CD8-positive, alpha-beta T cell (primary cell): ENCODE measurements at regions of chr13 and their contacts with region 1.

Region 1: DNA sequence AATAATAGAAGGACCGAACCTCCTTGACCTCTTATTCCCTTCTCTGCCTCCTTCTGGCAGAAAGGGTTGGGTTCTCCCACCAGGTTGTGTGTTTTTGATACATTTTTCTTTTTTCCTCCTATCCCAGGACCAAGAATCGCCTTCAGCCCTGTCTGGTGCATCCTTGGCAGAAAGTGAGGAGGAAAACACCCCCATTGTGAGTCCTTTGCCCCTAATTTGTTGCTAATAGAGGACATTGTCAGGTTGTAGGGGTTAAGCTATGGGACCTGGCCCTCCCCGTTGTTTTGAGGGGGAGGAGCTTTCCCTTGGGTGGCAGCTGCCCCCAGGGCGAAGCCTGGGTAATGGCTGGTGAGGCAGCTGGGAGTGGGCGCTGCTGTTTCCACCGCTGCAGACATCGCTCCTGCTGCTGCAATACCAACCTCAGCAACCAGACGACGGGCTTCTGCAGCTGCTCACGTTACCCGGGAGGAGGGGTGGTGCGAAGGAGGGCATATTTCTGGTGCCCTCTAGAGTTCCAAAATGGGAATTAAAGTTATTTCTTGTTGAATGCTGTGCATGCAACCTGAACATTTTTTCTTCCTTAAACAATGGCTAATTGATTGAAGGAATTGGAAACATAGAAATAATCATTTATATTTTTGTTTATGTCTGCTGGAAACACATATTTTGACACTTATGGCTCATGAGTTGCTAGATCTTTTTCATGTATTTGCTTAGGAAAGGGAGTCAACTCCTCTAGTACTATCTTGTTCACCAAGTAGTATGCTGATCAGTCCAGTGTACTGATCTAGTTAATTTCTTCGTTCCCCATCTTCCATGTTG is 1.5 kb downstream of the ZMYM2 start:
- DNase-seq: peak; percentile 69 to 95 (median 84)
- ATAC-seq: peak; percentile 50
- H3K4me3 ChIP-seq: peak overlapping the region; percentile 56 to 88
- H3K4me3 Mint-ChIP-seq: peak overlapping the region; percentile 97
- H3K27ac ChIP-seq: peak overlapping the region; percentile 59 to 79
- H3K27ac Mint-ChIP-seq: peak overlapping the region; percentile 98
- H3K4me1 ChIP-seq: peaks cover 29% of the 10 kb centered on the region
- H3K4me1 Mint-ChIP-seq: peaks cover 45% of the 10 kb centered on the region
- H3K27me3 ChIP-seq: no peaks in the 10 kb centered on the region
- H3K27me3 Mint-ChIP-seq: no peaks in the 10 kb centered on the region
- CTCF ChIP-seq: peak; percentile 94

Region 2: DNA sequence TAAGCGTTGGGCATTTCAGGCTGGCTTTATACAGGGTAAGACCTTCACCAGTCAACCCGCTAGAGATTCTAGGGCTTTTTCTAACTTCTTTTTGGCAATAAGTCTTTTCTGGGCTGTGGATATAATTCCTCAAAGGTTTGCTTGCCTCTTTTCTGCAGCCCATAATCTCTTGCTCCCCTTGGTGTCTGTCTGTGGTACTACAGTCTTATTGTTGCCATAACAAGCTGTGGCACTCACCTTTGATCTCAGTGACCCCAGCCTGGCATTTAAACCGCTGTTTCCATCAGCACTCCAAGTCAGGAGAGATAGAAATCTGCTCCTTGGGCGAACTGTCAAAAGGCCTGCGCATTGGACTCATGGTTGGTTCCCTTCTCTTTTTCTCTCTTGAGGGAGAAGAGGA is 341.1 kb before region 1 on chr13:
- CTCF ChIA-PET with region 1: no interaction called
- POLR2A ChIA-PET with region 1: no interaction called
- intact Hi-C with region 1: no loop called
- DNase-seq: peak in 2 of 9 experiments; percentile 26 to 50
- ATAC-seq: no peak
- H3K4me3 ChIP-seq: no peak overlapping the region
- H3K4me3 Mint-ChIP-seq: no peak overlapping the region
- H3K27ac ChIP-seq: no peak overlapping the region
- H3K27ac Mint-ChIP-seq: no peak overlapping the region
- H3K4me1 ChIP-seq: no peaks in the 10 kb centered on the region
- H3K4me1 Mint-ChIP-seq: no peaks in the 10 kb centered on the region
- H3K27me3 ChIP-seq: no peaks in the 10 kb centered on the region
- H3K27me3 Mint-ChIP-seq: peaks cover 35% of the 10 kb centered on the region
- CTCF ChIP-seq: peak; percentile 50

Region 3: DNA sequence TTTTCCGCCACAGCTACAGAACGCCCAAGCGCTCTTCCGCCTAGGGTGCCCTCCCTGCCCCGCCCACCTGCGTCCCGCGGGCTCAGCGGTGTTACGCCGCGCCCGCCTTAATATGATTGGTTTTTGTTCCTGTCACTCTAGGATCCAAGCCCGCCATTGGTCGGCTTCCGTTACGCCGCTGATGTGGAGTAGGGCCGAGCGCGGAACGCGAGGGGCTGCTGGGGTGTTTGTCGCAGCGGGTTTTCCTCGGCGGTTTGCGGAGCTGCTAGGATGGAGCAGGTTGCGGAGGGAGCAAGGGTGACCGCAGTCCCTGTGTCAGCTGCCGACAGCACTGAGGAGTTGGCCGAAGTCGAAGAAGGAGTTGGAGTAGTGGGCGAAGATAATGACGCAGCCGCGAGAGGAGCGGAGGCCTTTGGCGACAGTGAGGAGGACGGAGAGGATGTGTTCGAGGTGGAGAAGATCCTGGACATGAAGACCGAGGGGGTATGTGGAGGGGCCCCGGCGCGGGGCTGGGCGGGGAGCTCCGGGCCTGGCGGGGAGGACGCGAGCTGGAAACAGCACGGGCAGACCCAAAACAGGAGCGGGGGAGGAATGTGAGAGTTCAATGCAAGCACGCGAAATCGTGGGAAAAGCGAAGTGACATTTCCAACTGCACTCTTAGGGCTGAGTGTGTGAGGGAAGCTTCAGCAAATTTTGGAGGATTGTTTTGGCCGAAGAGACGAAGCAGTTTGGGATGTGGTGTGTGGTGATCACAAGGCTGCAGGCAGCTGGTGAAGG is 326.4 kb before region 1 on chr13 and contains the start of gene MPHOSPH8:
- CTCF ChIA-PET with region 1: no interaction called
- POLR2A ChIA-PET with region 1: interaction called, 3 read pairs
- intact Hi-C with region 1: loop called (anchors 1 to 5 kb)
- DNase-seq: peak; percentile 88 to 98 (median 93)
- ATAC-seq: peak; percentile 95
- H3K4me3 ChIP-seq: peak within 1 kb of the TSS; percentile 82 to 89
- H3K4me3 Mint-ChIP-seq: peak within 1 kb of the TSS; percentile 100
- H3K27ac ChIP-seq: peak within 1 kb of the TSS; percentile 88 to 90
- H3K27ac Mint-ChIP-seq: peak within 1 kb of the TSS; percentile 100
- H3K4me1 ChIP-seq: peaks cover 35% of the 10 kb centered on the region
- H3K4me1 Mint-ChIP-seq: peaks cover 33% of the 10 kb centered on the region
- H3K27me3 ChIP-seq: no peaks in the 10 kb centered on the region
- H3K27me3 Mint-ChIP-seq: no peaks in the 10 kb centered on the region
- CTCF ChIP-seq: no peak
- total RNA-seq, gene MPHOSPH8: 32.9 to 35.6 TPM

Region 4: GRCh38 chr13:19863323-19864023 is 96.6 kb before region 1 on chr13 and contains the start of gene ZMYM5:
- CTCF ChIA-PET with region 1: interaction called, 6 read pairs
- POLR2A ChIA-PET with region 1: interaction called, 17 read pairs
- intact Hi-C with region 1: loop called in 1 of 2 experiments (anchors 1 kb)
- DNase-seq: peak; percentile 85 to 98 (median 95)
- ATAC-seq: peak; percentile 83
- H3K4me3 ChIP-seq: peak within 1 kb of the TSS; percentile 64 to 74
- H3K4me3 Mint-ChIP-seq: peak within 1 kb of the TSS; percentile 90
- H3K27ac ChIP-seq: peak within 1 kb of the TSS; percentile 78 to 97
- H3K27ac Mint-ChIP-seq: peak within 1 kb of the TSS; percentile 97
- H3K4me1 ChIP-seq: peaks cover 25% of the 10 kb centered on the region
- H3K4me1 Mint-ChIP-seq: peaks cover 35% of the 10 kb centered on the region
- H3K27me3 ChIP-seq: no peaks in the 10 kb centered on the region
- H3K27me3 Mint-ChIP-seq: no peaks in the 10 kb centered on the region
- CTCF ChIP-seq: no peak
- total RNA-seq, gene ZMYM5: 25.1 to 25.8 TPM

Region 5: GRCh38 chr13:19940106-19940505 is 19.9 kb before region 1 on chr13:
- CTCF ChIA-PET with region 1: interaction called, 5 read pairs
- POLR2A ChIA-PET with region 1: no interaction called
- intact Hi-C with region 1: loop called in 1 of 2 experiments (anchors 1 kb)
- DNase-seq: no peak
- ATAC-seq: no peak
- H3K4me3 ChIP-seq: no peak overlapping the region
- H3K4me3 Mint-ChIP-seq: no peak overlapping the region
- H3K27ac ChIP-seq: no peak overlapping the region
- H3K27ac Mint-ChIP-seq: no peak overlapping the region
- H3K4me1 ChIP-seq: no peaks in the 10 kb centered on the region
- H3K4me1 Mint-ChIP-seq: no peaks in the 10 kb centered on the region
- H3K27me3 ChIP-seq: peaks cover 0 to 3% of the 10 kb centered on the region in 2 experiments
- H3K27me3 Mint-ChIP-seq: peaks cover 14% of the 10 kb centered on the region
- CTCF ChIP-seq: no peak

Region 6: GRCh38 chr13:19978831-19979437 is 18.9 kb after region 1 on chr13:
- CTCF ChIA-PET with region 1: no interaction called
- POLR2A ChIA-PET with region 1: no interaction called
- intact Hi-C with region 1: no loop called
- DNase-seq: no peak
- ATAC-seq: no peak
- H3K4me3 ChIP-seq: no peak overlapping the region
- H3K4me3 Mint-ChIP-seq: no peak overlapping the region
- H3K27ac ChIP-seq: no peak overlapping the region
- H3K27ac Mint-ChIP-seq: no peak overlapping the region
- H3K4me1 ChIP-seq: peaks cover 3% of the 10 kb centered on the region
- H3K4me1 Mint-ChIP-seq: peaks cover 48% of the 10 kb centered on the region
- H3K27me3 ChIP-seq: no peaks in the 10 kb centered on the region
- H3K27me3 Mint-ChIP-seq: no peaks in the 10 kb centered on the region
- CTCF ChIP-seq: no peak

Region 7: GRCh38 chr13:20118268-20119140 is 158.5 kb after region 1 on chr13:
- CTCF ChIA-PET with region 1: no interaction called
- POLR2A ChIA-PET with region 1: interaction called, 3 read pairs
- intact Hi-C with region 1: loop called in 1 of 2 experiments (anchors 1 kb)
- DNase-seq: peak in 7 of 9 experiments; percentile 34 to 64 (median 49)
- ATAC-seq: peak; percentile 44
- H3K4me3 ChIP-seq: peak overlapping the region; percentile 54 to 65
- H3K4me3 Mint-ChIP-seq: peak overlapping the region; percentile 90
- H3K27ac ChIP-seq: peak overlapping the region in 1 of 2 experiments; percentile 36
- H3K27ac Mint-ChIP-seq: peak overlapping the region; percentile 84
- H3K4me1 ChIP-seq: peaks cover 16% of the 10 kb centered on the region
- H3K4me1 Mint-ChIP-seq: peaks cover 20% of the 10 kb centered on the region
- H3K27me3 ChIP-seq: no peaks in the 10 kb centered on the region
- H3K27me3 Mint-ChIP-seq: peaks cover 2% of the 10 kb centered on the region
- CTCF ChIP-seq: no peak

Region 8: GRCh38 chr13:20475927-20476691 is 516.1 kb after region 1 on chr13:
- CTCF ChIA-PET with region 1: interaction called, 4 read pairs
- POLR2A ChIA-PET with region 1: no interaction called
- intact Hi-C with region 1: loop called (anchors 5 to 10 kb)
- DNase-seq: peak; percentile 48 to 92 (median 69)
- ATAC-seq: peak; percentile 88
- H3K4me3 ChIP-seq: peak overlapping the region; percentile 9 to 52
- H3K4me3 Mint-ChIP-seq: peak overlapping the region; percentile 81
- H3K27ac ChIP-seq: peak overlapping the region; percentile 48 to 91
- H3K27ac Mint-ChIP-seq: peak overlapping the region; percentile 98
- H3K4me1 ChIP-seq: peaks cover 34% of the 10 kb centered on the region
- H3K4me1 Mint-ChIP-seq: peaks cover 63% of the 10 kb centered on the region
- H3K27me3 ChIP-seq: no peaks in the 10 kb centered on the region
- H3K27me3 Mint-ChIP-seq: no peaks in the 10 kb centered on the region
- CTCF ChIP-seq: no peak

Region 9: DNA sequence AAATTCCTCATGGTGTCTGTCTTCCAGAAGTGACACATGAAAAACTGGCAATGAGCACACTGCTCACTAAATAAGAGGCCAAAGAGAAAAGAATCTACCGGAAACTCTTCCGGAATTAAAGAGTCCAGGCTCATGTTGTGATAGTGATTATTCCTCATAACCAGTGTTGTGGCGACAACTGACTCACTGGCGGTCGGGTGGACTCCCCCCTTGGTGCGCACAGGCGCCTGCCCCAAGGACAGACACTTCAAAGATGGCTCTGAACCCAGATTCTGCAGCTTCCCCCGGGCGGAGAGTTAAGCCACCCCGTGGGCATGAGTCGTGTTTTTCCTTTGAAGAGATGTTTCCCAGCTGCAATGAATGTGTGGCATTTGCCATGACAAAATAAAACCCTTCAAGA is 753.7 kb after region 1 on chr13:
- CTCF ChIA-PET with region 1: no interaction called
- POLR2A ChIA-PET with region 1: no interaction called
- intact Hi-C with region 1: no loop called
- DNase-seq: no peak
- ATAC-seq: no peak
- H3K4me3 ChIP-seq: no peak overlapping the region
- H3K4me3 Mint-ChIP-seq: no peak overlapping the region
- H3K27ac ChIP-seq: no peak overlapping the region
- H3K27ac Mint-ChIP-seq: no peak overlapping the region
- H3K4me1 ChIP-seq: peaks cover 4% of the 10 kb centered on the region
- H3K4me1 Mint-ChIP-seq: peaks cover 8% of the 10 kb centered on the region
- H3K27me3 ChIP-seq: no peaks in the 10 kb centered on the region
- H3K27me3 Mint-ChIP-seq: peaks cover 2% of the 10 kb centered on the region
- CTCF ChIP-seq: no peak